Heart left ventricle (tissue), 16 donors: ENCODE measurements at regions of chr1 and their contacts with region 1.

Region 1: DNA sequence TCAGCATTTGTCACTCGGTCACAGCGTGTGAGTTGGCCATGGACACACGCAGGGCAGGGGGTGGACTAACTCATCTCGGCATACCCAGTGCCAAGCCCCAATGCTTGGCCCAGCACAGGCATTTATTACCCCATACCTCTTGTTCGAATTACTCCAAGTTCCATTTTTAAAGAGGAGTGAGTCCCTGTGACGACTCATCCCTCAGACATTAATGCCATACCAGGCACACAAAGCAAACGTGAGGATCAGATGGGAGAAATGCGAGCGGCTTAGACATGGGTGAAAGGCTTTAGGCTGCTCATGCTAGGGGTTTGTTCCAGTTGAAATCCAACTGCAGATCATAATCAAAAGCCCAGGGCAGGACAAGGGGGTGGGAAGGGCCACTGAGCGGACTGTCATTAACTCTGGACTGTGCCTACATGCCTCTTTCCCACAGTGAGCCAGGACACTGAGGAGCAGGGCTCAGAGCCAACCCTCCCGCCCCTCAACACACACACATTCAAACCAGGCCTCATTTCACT is 118.5 kb upstream of the NGF start:
- DNase-seq: no peak
- ATAC-seq: peak; percentile 53 to 62 (median 58)
- H3K4me3 ChIP-seq: no peak overlapping the region
- H3K27ac ChIP-seq: peak overlapping the region in 2 of 12 donors; percentile 9 to 26
- H3K4me1 ChIP-seq: peaks cover 0 to 19% (median 5%) of the 10 kb centered on the region in 12 donors
- H3K27me3 ChIP-seq: no peaks in the 10 kb centered on the region
- CTCF ChIP-seq: no peak
- POLR2A ChIP-seq: no peak

Region 2: DNA sequence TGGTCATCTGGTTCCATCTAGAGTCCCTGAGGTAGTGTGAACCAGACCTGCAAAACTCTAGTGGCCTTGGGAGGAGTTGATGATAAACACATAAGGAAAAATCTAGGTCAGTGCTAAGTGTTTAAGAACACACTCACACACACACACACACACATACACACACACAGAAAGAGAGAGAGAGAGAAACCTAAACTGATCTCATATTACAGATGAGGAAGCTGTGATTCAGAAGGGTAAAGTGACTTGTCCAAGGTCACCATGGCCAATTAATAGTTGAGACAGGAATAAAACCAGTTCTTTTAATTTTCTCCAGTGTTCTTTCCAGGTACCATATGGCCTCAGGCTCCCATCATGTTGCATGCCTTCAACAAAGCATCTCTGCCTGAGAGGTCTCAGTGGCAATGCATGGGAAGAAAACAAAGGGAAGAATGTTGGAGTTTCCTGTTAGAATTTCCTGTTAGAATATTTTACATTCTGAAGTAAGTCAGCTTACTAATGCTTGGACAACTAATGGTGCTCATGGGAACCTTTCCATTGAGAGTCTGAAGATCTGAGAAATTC is 289.9 kb before region 1 on chr1:
- intact Hi-C with region 1: no loop called
- DNase-seq: no peak
- ATAC-seq: no peak
- H3K4me3 ChIP-seq: no peak overlapping the region
- H3K27ac ChIP-seq: no peak overlapping the region
- H3K4me1 ChIP-seq: peaks cover 0 to 9% (median 0%) of the 10 kb centered on the region in 12 donors
- H3K27me3 ChIP-seq: no peaks in the 10 kb centered on the region
- CTCF ChIP-seq: no peak
- POLR2A ChIP-seq: no peak

Region 3: GRCh38 chr1:115275212-115275611 is 181.3 kb before region 1 on chr1:
- intact Hi-C with region 1: loop called in 5 of 10 experiments (anchors 5 to 10 kb)
- DNase-seq: no peak
- ATAC-seq: no peak
- H3K4me3 ChIP-seq: no peak overlapping the region
- H3K27ac ChIP-seq: peak overlapping the region in 5 of 12 donors; percentile 7 to 66 (median 28)
- H3K4me1 ChIP-seq: peaks cover 0 to 16% (median 0%) of the 10 kb centered on the region in 12 donors
- H3K27me3 ChIP-seq: no peaks in the 10 kb centered on the region
- CTCF ChIP-seq: peak in 11 of 12 donors; percentile 22 to 51 (median 33)
- POLR2A ChIP-seq: no peak

Region 4: DNA sequence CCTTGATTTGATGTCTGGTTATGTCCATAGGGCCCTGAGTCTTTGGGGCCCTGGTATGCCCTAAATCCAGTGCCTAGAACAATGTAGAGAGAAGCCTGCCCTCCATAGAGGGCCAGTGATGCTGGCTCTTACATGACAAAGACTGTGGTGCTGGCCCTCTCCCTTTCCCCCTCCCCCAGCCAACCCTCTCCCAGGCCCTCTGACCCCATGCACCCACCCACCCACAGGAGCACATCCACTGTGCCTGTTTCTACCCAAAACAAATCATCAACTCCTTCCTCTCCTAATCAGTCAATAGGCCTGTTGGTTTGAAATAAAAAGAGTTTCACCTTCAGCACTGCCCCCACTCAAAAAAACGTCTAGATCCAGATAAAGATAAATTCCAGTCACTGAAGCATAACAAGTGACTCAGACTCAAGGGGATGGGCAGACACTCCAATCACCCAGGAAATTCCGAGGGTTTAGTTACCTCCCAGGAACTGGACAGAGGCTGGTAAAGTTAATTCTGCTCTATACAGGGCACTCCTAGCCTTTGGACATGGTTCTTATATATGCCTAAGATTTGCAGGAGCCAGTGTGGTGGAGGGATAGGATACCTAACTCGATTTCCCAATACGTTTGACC is 40.5 kb after region 1 on chr1:
- intact Hi-C with region 1: no loop called
- DNase-seq: no peak
- ATAC-seq: no peak
- H3K4me3 ChIP-seq: no peak overlapping the region
- H3K27ac ChIP-seq: no peak overlapping the region
- H3K4me1 ChIP-seq: peaks cover 0 to 3% (median 0%) of the 10 kb centered on the region in 12 donors
- H3K27me3 ChIP-seq: no peaks in the 10 kb centered on the region
- CTCF ChIP-seq: no peak
- POLR2A ChIP-seq: no peak

Region 5: GRCh38 chr1:115879977-115880376 is 423.5 kb after region 1 on chr1:
- intact Hi-C with region 1: no loop called
- DNase-seq: no peak
- ATAC-seq: no peak
- H3K4me3 ChIP-seq: no peak overlapping the region
- H3K27ac ChIP-seq: no peak overlapping the region
- H3K4me1 ChIP-seq: peaks cover 0 to 6% (median 0%) of the 10 kb centered on the region in 12 donors
- H3K27me3 ChIP-seq: peaks cover 0 to 13% (median 2%) of the 10 kb centered on the region in 9 donors
- CTCF ChIP-seq: no peak
- POLR2A ChIP-seq: no peak